Activated naive CD4-positive, alpha-beta T cell treated with anti-CD3 and anti-CD28 coated beads, Interleukin-2, amount 10 ng/mL, durations not matched to agents 7 days and 5 days (primary cell): ENCODE measurements at regions of chr6 and their contacts with region 1.

Region 1: DNA sequence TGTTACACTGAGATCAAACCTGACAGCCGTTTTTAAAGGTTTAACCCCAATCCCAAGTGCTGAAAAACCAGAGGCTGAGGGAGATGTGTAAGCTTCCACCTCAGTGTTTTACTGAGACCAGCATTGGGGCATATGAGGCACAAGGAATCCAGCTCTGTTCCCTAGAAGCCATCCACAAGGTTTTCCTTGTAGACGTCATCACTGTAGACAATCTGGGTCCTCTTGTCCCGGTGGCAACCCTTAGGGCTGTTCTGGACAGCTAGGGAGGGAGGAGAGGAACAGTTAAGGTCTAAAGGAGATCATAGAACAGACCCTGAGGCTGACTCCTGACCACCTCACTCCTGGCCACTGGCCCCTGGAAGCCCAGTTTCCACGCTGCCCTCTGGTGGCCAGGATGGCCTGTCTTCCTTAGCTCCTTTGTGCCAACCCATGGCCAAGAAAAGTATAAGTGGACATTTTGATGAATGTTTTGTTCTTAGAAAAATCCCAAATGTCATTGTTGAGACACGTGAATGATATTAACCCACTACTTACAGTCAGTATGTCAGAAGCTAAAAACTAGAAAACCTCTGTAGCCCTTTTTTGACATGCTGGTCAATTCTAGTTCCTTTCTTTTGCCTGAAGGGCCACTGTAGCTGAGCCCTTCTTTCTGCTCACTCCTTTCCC is 6.4 kb downstream of the CFB start:
- DNase-seq: peak; percentile 55
- H3K4me3 Mint-ChIP-seq: no peak overlapping the region
- H3K27ac Mint-ChIP-seq: no peak overlapping the region
- H3K4me1 Mint-ChIP-seq: peaks cover 2% of the 10 kb centered on the region
- H3K27me3 Mint-ChIP-seq: peaks cover 4% of the 10 kb centered on the region

Region 2: DNA sequence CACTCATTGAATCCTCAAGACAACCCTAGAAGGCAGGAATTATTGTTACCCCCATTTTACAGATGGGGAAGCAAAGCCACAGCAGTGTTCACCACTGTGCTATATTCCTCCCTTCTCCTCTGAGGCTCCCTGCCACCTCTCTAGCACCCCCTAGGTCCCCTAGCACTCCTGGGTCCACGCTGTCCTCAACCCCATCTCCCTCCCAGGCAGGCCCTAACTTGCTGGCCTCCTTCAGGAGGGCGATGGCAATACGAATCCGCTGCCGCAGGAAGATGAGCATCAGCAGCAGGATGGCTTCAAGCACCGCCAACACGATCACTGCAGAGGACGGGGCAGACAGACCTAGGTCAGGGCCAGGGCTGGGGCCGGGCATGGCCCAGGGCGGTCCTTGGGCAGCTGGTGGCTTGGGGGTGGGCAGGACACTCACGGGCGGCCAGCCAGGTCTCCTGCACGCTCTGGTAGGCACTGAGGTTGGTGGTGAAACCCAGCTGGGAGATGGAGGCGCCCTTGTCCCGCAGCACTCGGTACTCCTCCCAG is 81.8 kb before region 1 on chr6:
- CTCF ChIA-PET with region 1: no interaction called
- DNase-seq: no peak
- H3K4me3 Mint-ChIP-seq: no peak overlapping the region
- H3K27ac Mint-ChIP-seq: no peak overlapping the region
- H3K4me1 Mint-ChIP-seq: peaks cover 11% of the 10 kb centered on the region
- H3K27me3 Mint-ChIP-seq: peaks cover 49% of the 10 kb centered on the region

Region 3: GRCh38 chr6:31940256-31940664 is 12.0 kb before region 1 on chr6:
- CTCF ChIA-PET with region 1: interaction called, 18 read pairs
- DNase-seq: no peak
- H3K4me3 Mint-ChIP-seq: no peak overlapping the region
- H3K27ac Mint-ChIP-seq: no peak overlapping the region
- H3K4me1 Mint-ChIP-seq: peaks cover under 1% of the 10 kb centered on the region
- H3K27me3 Mint-ChIP-seq: peaks cover 60% of the 10 kb centered on the region

Region 4: GRCh38 chr6:31965700-31966099 is 13.4 kb after region 1 on chr6:
- CTCF ChIA-PET with region 1: interaction called, 11 read pairs
- DNase-seq: no peak
- H3K4me3 Mint-ChIP-seq: no peak overlapping the region
- H3K27ac Mint-ChIP-seq: no peak overlapping the region
- H3K4me1 Mint-ChIP-seq: peaks cover 14% of the 10 kb centered on the region
- H3K27me3 Mint-ChIP-seq: no peaks in the 10 kb centered on the region

Region 5: GRCh38 chr6:32113386-32114352 is 161.4 kb after region 1 on chr6:
- CTCF ChIA-PET with region 1: no interaction called
- DNase-seq: no peak
- H3K4me3 Mint-ChIP-seq: no peak overlapping the region
- H3K27ac Mint-ChIP-seq: no peak overlapping the region
- H3K4me1 Mint-ChIP-seq: no peaks in the 10 kb centered on the region
- H3K27me3 Mint-ChIP-seq: peaks cover 16% of the 10 kb centered on the region